CD4-positive, alpha-beta T cell (primary cell): ENCODE measurements at regions of chr15 and their contacts with region 1.

Region 1: GRCh38 chr15:46502668-46503067 is 867.8 kb downstream of the SQOR start:
- DNase-seq: no peak
- ATAC-seq: no peak
- H3K4me3 ChIP-seq: no peak overlapping the region
- H3K4me3 Mint-ChIP-seq: no peak overlapping the region
- H3K27ac ChIP-seq: no peak overlapping the region
- H3K27ac Mint-ChIP-seq: no peak overlapping the region
- H3K4me1 ChIP-seq: no peaks in the 10 kb centered on the region
- H3K4me1 Mint-ChIP-seq: no peaks in the 10 kb centered on the region
- H3K27me3 ChIP-seq: no peaks in the 10 kb centered on the region
- H3K27me3 Mint-ChIP-seq: no peaks in the 10 kb centered on the region
- CTCF ChIP-seq: no peak

Region 2: DNA sequence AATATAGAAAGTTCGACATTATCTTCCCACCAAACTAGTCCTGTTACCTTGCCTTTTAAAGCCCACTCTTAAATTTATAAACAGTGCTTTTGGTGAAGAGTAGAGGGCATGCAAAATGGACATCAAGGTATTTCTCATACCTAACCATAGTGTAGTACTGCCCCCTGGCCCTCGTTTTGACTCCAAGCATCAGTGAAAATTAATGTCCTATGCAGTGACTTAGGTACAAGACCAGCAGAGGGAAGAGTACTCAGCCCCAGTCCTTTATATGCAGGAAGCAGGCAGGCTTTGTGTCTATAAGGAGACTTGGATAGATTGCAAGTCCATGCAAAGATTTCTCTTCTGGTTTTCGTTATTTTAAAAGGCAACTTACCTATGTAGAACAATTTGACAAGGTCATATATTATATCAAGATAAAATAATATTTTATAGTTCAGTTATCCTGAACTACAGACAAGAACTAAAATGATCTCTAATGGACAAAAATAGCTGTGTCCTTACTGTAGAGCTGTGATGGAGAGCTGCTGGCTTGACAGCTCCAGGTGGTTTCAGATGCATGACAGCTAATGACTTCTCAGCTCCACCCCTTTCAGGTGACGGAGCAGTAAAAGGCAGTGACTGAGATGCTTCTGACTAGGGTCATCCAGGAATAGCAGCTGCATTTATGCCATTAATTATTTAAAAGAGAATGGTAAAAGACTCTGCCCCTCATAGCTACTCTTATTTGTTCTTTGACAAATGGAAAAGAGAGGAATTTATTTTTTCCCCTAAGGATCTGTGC is 221.7 kb before region 1 on chr15:
- CTCF ChIA-PET with region 1: no interaction called
- POLR2A ChIA-PET with region 1: no interaction called
- intact Hi-C with region 1: no loop called
- DNase-seq: no peak
- ATAC-seq: no peak
- H3K4me3 ChIP-seq: no peak overlapping the region
- H3K4me3 Mint-ChIP-seq: no peak overlapping the region
- H3K27ac ChIP-seq: no peak overlapping the region
- H3K27ac Mint-ChIP-seq: no peak overlapping the region
- H3K4me1 ChIP-seq: no peaks in the 10 kb centered on the region
- H3K4me1 Mint-ChIP-seq: no peaks in the 10 kb centered on the region
- H3K27me3 ChIP-seq: no peaks in the 10 kb centered on the region
- H3K27me3 Mint-ChIP-seq: no peaks in the 10 kb centered on the region
- CTCF ChIP-seq: no peak

Region 3: DNA sequence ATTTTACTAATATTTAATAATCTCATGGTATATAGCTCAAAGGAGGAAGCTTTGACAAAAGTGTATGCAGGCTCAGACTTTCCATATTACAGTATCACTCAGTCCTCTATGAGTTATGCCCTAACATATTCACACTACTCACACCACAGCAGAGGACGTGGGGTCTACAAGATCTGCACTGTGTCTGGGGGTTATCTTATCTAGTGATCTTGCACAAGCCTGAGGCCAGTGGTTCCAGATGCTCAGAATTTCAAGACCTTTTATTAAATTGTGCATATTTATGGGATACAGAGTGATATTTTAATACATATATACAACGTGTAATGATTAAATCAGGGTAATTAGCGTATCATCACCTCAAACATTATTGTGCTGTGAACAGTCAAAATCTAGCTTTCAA is 65.3 kb after region 1 on chr15:
- CTCF ChIA-PET with region 1: no interaction called
- POLR2A ChIA-PET with region 1: no interaction called
- intact Hi-C with region 1: loop called in 1 of 2 experiments (anchors 10 kb)
- DNase-seq: no peak
- ATAC-seq: no peak
- H3K4me3 ChIP-seq: no peak overlapping the region
- H3K4me3 Mint-ChIP-seq: no peak overlapping the region
- H3K27ac ChIP-seq: no peak overlapping the region
- H3K27ac Mint-ChIP-seq: no peak overlapping the region
- H3K4me1 ChIP-seq: no peaks in the 10 kb centered on the region
- H3K4me1 Mint-ChIP-seq: no peaks in the 10 kb centered on the region
- H3K27me3 ChIP-seq: no peaks in the 10 kb centered on the region
- H3K27me3 Mint-ChIP-seq: no peaks in the 10 kb centered on the region
- CTCF ChIP-seq: no peak

Region 4: GRCh38 chr15:46918462-46919135 is 415.9 kb after region 1 on chr15:
- CTCF ChIA-PET with region 1: no interaction called
- POLR2A ChIA-PET with region 1: no interaction called
- intact Hi-C with region 1: no loop called
- DNase-seq: no peak
- ATAC-seq: no peak
- H3K4me3 ChIP-seq: no peak overlapping the region
- H3K4me3 Mint-ChIP-seq: no peak overlapping the region
- H3K27ac ChIP-seq: no peak overlapping the region
- H3K27ac Mint-ChIP-seq: no peak overlapping the region
- H3K4me1 ChIP-seq: no peaks in the 10 kb centered on the region
- H3K4me1 Mint-ChIP-seq: no peaks in the 10 kb centered on the region
- H3K27me3 ChIP-seq: no peaks in the 10 kb centered on the region
- H3K27me3 Mint-ChIP-seq: no peaks in the 10 kb centered on the region
- CTCF ChIP-seq: no peak